ENCODE measurements at regions of chr1 and their contacts with region 1.

Region 1: DNA sequence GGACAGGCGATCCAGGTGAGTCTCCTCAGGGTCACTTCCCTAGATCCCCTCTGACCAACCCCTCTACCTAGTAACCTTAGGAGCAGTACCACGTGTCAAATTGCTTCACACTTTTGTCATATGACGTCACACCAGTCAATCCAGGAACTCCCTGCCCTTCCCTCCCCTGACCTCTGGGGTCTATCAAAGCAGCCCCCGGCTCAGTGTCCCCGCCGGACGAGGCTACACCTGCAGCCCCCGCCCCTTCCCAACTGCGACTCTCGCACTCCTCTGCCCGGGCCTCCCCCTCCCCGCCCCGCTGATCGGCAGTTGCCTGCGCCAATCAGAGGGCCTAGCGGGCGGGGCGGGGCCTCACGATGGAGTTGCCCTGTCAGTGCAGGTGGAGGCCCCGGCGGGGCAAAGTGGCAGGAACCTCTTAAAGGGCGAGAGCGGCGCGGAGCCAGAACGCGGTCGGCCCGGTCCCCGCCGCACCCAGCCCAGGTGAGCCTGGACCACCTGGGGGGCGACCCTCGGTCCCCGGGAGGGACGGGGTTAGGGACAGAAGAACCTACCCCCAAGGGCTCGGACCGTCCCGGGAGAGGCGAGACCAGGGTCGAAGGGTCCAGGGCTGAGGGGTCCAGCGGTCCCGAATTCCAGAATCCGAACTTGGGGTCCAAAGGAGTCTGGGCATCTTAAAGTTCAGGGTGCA is 27.5 kb upstream of the EPB41 start:
- DNase-seq: peak; percentile 91 to 95 (median 95)
- ATAC-seq: peak; percentile 88
- H3K4me3 ChIP-seq: peak overlapping the region; percentile 94
- H3K4me1 ChIP-seq: peaks cover 20% of the 10 kb centered on the region
- CTCF ChIP-seq: no peak

Region 2: DNA sequence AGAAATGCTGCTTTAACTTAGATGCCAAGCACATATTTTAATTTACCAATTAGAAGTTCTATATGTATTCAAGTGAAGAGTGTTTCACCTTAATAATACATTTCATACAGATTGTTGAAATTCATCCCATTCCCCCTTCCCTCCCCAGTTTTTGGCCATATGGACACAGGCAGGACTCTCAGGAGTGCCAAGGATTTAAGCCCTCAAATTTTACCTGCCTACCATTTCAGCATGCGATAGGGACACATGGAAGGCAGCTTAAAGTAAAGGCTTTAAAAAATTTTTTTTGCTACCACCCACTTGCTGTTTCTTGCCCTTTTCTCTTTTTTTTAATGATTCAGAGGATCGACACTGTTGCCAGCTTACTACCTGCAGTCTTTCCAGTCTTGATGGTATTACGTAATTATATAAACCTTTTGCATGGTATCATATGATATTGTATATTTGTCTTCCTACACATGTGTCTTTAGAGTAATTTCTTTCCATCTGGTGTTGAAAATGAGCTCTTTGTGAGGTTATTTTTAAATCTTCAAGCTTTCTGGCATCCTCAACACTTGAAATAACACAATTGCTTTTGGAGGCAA is 34.5 kb after region 1 on chr1:
- intact Hi-C with region 1: no loop called
- DNase-seq: no peak
- ATAC-seq: no peak
- H3K4me3 ChIP-seq: no peak overlapping the region
- H3K4me1 ChIP-seq: peaks cover 3% of the 10 kb centered on the region
- CTCF ChIP-seq: no peak

Region 3: GRCh38 chr1:28936528-28936927 is 49.7 kb after region 1 on chr1:
- intact Hi-C with region 1: no loop called
- DNase-seq: no peak
- ATAC-seq: no peak
- H3K4me3 ChIP-seq: no peak overlapping the region
- H3K4me1 ChIP-seq: peaks cover 7% of the 10 kb centered on the region
- CTCF ChIP-seq: no peak

Region 4: GRCh38 chr1:29033829-29034466 is 147.1 kb after region 1 on chr1:
- intact Hi-C with region 1: loop called in 1 of 2 experiments (anchors 5 kb)
- DNase-seq: peak in 1 of 3 donors; percentile 4
- ATAC-seq: peak; percentile 66
- H3K4me3 ChIP-seq: no peak overlapping the region
- H3K4me1 ChIP-seq: no peaks in the 10 kb centered on the region
- CTCF ChIP-seq: peak; percentile 23

Region 5: DNA sequence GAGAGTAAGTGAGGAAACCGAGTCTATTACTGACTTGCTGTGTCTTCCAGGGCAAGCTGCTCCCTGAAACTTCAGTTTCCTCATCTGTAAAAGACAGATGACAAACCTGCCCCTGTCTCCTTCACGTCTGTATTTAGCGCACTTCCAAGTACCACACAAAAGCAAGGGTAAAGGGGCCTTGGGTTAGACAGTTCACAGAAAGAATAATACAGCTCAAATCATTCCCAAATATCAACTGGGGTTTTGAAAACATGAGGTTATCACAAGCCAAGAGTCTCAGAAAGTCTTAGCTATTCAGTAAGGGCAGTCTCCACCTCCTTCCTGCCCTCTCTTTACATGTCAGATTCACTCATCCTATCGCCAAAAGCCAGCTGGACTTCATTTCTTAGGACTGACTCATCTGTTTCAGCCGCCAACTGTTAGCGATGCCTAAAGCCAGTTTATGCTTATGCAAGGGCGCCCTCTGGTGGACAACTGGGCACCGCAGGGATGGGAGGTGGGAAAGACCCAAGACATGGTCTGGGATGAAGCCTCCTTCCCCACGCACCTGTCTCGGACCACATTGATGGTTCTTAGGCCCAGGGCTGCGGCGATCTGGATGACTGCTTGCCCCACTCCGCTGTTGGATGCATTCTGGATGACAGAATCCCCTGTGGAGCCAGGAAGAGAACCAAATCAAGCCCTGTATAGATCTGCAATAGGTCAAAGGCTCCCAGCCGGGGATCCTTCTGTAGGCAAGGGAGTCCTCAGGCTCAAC is 315.9 kb after region 1 on chr1:
- intact Hi-C with region 1: loop called (anchors 5 kb)
- DNase-seq: peak; percentile 90 to 99 (median 94)
- ATAC-seq: peak; percentile 99
- H3K4me3 ChIP-seq: no peak overlapping the region
- H3K4me1 ChIP-seq: peaks cover 10% of the 10 kb centered on the region
- CTCF ChIP-seq: peak; percentile 91